ENCODE measurements at regions of chr5 and their contacts with region 1.

Region 1: GRCh38 chr5:118987988-118988865 is at the start of gene DTWD2:
- DNase-seq: peak; percentile 77
- H3K4me3 ChIP-seq: peak within 1 kb of the TSS; percentile 74
- H3K27ac ChIP-seq: no peak within 1 kb of the TSS
- H3K27me3 ChIP-seq: no peaks in the 10 kb centered on the region
- CTCF ChIP-seq: peak; percentile 82
- polyA plus RNA-seq, gene DTWD2: 1.5 and 1.9 TPM in 2 replicates

Region 2: GRCh38 chr5:118789358-118789757 is 198.9 kb before region 1 on chr5:
- CTCF ChIA-PET with region 1: no interaction called
- POLR2A ChIA-PET with region 1: no interaction called
- DNase-seq: no peak
- H3K4me3 ChIP-seq: no peak overlapping the region
- H3K27ac ChIP-seq: no peak overlapping the region
- H3K27me3 ChIP-seq: no peaks in the 10 kb centered on the region
- CTCF ChIP-seq: no peak

Region 3: DNA sequence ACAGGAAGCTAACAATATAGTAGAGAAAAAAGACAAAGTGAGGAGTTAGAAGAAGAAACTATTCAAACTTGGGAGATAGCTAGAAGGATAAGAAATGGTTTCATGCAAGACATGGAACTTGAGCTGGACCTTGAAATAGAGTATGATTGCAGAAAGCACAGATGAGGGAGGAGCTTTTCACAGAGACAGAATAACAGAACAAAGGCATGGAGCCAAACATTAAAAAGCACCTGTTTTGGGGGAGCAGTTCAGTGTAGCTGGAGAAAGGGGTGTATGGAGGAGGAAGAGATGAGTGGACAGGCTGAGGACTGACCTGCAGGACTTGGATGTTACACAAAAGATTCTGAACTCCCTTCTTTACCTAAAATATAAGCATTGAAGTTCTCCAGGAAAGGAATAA is 25.1 kb before region 1 on chr5:
- CTCF ChIA-PET with region 1: no interaction called
- POLR2A ChIA-PET with region 1: no interaction called
- DNase-seq: no peak
- H3K4me3 ChIP-seq: no peak overlapping the region
- H3K27ac ChIP-seq: no peak overlapping the region
- H3K27me3 ChIP-seq: no peaks in the 10 kb centered on the region
- CTCF ChIP-seq: no peak

Region 4: DNA sequence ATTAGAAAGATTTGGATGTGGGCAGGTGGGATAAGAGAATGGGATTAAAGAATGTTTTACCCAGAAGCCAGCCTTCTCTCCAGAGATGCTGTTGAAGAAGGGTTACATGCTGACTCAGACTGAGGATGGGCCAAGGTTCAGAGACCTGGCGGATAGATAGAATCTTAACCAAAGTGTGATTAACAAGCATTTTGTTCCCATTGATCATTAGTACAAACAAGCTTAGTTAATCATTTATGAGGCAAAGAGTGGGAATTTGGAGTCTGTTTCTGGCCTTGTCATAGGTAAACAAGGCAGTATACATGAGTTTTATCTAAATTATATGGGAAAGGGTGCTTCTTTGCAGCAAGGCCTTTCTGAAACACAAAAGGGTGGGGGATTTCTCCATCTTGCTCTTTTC is 20.9 kb after region 1 on chr5:
- CTCF ChIA-PET with region 1: interaction called, 13 read pairs
- POLR2A ChIA-PET with region 1: no interaction called
- DNase-seq: no peak
- H3K4me3 ChIP-seq: no peak overlapping the region
- H3K27ac ChIP-seq: no peak overlapping the region
- H3K27me3 ChIP-seq: no peaks in the 10 kb centered on the region
- CTCF ChIP-seq: no peak

Region 5: GRCh38 chr5:119022017-119022745 is 34.0 kb after region 1 on chr5:
- CTCF ChIA-PET with region 1: interaction called, 18 read pairs
- POLR2A ChIA-PET with region 1: no interaction called
- DNase-seq: peak; percentile 15
- H3K4me3 ChIP-seq: no peak overlapping the region
- H3K27ac ChIP-seq: no peak overlapping the region
- H3K27me3 ChIP-seq: no peaks in the 10 kb centered on the region
- CTCF ChIP-seq: peak; percentile 64

Region 6: DNA sequence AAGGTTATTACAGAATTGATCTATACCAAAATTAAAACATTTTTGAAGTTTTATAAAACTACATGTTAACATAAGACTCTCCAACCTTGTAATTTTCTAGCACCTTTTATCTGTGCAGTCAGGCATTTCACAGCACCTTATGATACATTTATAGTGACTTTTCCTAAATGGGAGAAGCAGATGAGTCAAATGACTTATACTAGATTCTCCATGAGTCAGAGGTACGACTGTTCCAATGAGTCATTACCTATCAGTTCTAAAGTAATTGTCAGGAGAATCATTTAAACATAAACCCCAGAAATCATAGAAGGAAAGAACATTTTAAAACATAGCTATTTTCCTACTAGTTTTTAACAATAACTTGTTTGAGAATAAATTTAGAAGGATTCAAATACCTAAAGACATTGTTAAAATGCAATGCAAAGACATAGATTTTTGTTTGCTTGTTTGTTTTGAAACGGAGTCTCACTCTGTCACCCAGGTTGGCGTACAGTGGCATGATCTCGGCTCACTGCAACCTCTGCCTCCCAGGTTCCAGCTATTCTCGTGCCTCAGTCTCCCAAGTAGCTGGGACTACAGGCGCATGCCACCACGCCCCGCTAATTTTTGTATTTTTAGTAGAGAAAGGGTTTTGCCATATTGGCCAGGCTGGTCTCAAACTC is 48.0 kb after region 1 on chr5:
- CTCF ChIA-PET with region 1: no interaction called
- POLR2A ChIA-PET with region 1: no interaction called
- DNase-seq: peak; percentile 26
- H3K4me3 ChIP-seq: no peak overlapping the region
- H3K27ac ChIP-seq: no peak overlapping the region
- H3K27me3 ChIP-seq: no peaks in the 10 kb centered on the region
- CTCF ChIP-seq: no peak

Region 7: DNA sequence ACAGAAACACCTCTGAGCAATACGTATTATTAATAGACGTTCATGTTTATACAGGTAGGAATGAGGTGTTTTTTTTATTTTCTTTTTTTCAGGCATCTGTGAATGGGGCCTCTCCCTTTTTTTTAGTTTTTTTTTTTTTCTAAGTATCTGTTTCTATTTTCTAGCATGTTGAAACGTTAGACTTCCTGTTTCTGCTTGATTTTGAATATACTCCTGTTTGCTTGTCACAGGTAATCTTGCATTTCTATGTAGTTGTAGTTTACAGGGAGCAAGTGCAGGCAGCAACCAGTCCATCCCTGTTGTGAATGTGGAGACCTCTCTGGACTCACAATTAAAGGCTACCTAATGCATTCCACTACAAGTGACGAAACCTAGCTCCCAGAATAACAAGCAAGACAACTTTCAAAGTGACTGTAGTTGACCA is 344.8 kb after region 1 on chr5:
- CTCF ChIA-PET with region 1: interaction called, 11 read pairs
- POLR2A ChIA-PET with region 1: no interaction called
- DNase-seq: no peak
- H3K4me3 ChIP-seq: no peak overlapping the region
- H3K27ac ChIP-seq: no peak overlapping the region
- H3K27me3 ChIP-seq: no peaks in the 10 kb centered on the region
- CTCF ChIP-seq: no peak

Region 8: GRCh38 chr5:119418531-119419116 is 430.4 kb after region 1 on chr5:
- CTCF ChIA-PET with region 1: interaction called, 228 read pairs
- POLR2A ChIA-PET with region 1: no interaction called
- DNase-seq: no peak
- H3K4me3 ChIP-seq: no peak overlapping the region
- H3K27ac ChIP-seq: peak overlapping the region; percentile 31
- H3K27me3 ChIP-seq: peaks cover 4% of the 10 kb centered on the region
- CTCF ChIP-seq: no peak

Region 9: DNA sequence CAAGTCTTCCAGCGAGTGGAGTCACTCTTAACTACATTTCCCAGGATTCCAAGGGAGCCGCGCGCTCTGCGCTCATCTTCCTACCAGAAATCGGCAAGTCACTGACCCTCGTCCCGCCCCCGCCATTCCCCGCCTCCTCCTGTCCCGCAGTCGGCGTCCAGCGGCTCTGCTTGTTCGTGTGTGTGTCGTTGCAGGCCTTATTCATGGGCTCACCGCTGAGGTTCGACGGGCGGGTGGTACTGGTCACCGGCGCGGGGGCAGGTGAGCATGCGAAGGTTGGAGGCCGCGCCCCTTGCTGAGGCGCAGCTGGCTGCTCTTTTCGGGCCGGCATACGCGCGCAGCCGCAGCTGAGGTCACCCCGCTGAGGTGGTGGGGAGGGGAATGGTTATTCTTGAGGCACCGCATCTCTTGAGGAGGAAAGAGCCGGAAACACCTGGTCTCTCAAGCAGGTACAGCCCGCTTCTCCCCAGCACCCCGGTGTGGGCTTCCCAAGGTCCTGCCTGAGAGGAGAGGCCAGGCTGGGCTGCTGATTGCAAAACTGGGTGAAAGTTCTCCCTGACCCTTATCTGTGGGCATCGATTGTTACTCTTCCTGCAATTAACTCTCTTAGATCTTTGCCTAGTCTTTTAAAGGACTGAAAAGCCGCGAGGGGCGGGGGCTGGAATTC is 464.3 kb after region 1 on chr5 and contains the start of gene HSD17B4:
- CTCF ChIA-PET with region 1: interaction called, 13 read pairs
- POLR2A ChIA-PET with region 1: no interaction called
- DNase-seq: peak; percentile 68
- H3K4me3 ChIP-seq: peak within 1 kb of the TSS; percentile 92
- H3K27ac ChIP-seq: peak within 1 kb of the TSS; percentile 75
- H3K27me3 ChIP-seq: peaks cover 3% of the 10 kb centered on the region
- CTCF ChIP-seq: no peak
- polyA plus RNA-seq, gene HSD17B4: 135 and 150 TPM in 2 replicates

Measured in AG04450 (cell line).